PC-3 (cell line): ENCODE measurements at regions of chrX and their contacts with region 1.

Region 1: DNA sequence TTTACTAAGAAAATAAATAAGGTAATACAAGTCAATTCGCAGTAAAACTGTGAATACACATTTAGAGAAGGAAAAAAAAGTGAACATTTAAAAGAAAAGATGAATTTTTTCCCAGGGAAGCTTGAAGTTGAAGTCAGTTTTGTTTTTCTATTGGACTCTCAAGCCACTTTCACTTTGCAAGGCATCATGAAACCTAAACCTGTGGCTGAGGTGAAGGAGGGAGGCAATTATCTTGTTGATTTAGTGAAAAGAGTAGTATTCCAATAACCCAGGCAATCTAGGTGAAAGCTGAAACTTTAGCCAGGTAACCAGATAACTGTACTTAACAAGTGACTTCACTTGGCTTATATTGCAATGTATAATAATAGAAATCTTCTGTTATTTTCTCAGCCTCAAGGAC is 138.6 kb downstream of the HDX start:
- DNase-seq: no peak
- ATAC-seq: no peak; the same call in 1 of the 2 replicates
- H3K4me3 ChIP-seq: no peak overlapping the region
- H3K27ac ChIP-seq: no peak overlapping the region
- H3K4me1 ChIP-seq: no peaks in the 10 kb centered on the region
- H3K27me3 ChIP-seq: no peaks in the 10 kb centered on the region
- CTCF ChIP-seq: no peak

Region 2: GRCh38 chrX:84441143-84441542 is 77.5 kb after region 1 on chrX:
- CTCF ChIA-PET with region 1: no interaction called
- POLR2A ChIA-PET with region 1: no interaction called
- intact Hi-C with region 1: loop called (anchors 1 kb)
- DNase-seq: peak; percentile 78
- ATAC-seq: peak; percentile 92
- H3K4me3 ChIP-seq: no peak overlapping the region
- H3K27ac ChIP-seq: peak overlapping the region; percentile 72
- H3K4me1 ChIP-seq: peaks cover 27% of the 10 kb centered on the region
- H3K27me3 ChIP-seq: no peaks in the 10 kb centered on the region
- CTCF ChIP-seq: no peak

Region 3: GRCh38 chrX:84501798-84502628 is 138.3 kb after region 1 on chrX and contains the start of gene HDX:
- CTCF ChIA-PET with region 1: no interaction called
- POLR2A ChIA-PET with region 1: no interaction called
- intact Hi-C with region 1: loop called (anchors 5 kb)
- DNase-seq: peak; percentile 80
- ATAC-seq: peak; percentile 96
- H3K4me3 ChIP-seq: peak within 1 kb of the TSS; percentile 80
- H3K27ac ChIP-seq: peak within 1 kb of the TSS; percentile 70
- H3K4me1 ChIP-seq: no peaks in the 10 kb centered on the region
- H3K27me3 ChIP-seq: no peaks in the 10 kb centered on the region
- CTCF ChIP-seq: no peak
- total RNA-seq, gene HDX: 2.8 and 3.4 TPM in 2 replicates

Region 4: DNA sequence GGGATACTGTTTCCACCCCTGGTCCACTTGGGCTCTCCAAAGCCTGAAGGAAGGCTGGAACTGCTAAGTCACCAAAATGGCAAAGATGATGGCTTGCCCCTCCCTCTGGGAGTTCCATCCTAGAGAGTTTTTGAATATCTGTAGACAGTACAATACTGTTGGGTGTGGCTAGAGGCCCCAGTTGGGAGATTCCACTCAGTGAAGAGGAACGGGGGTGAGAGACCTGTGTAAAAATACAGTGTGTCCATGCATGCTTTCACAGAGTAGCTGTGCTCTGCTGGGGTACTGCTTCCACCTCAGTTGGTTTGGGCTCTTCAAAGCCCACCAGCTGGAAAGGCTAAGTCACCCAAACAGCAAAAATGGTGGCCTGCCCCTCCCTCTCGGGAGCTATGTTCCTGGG is 530.2 kb after region 1 on chrX:
- CTCF ChIA-PET with region 1: no interaction called
- POLR2A ChIA-PET with region 1: no interaction called
- intact Hi-C with region 1: no loop called
- DNase-seq: no peak
- ATAC-seq: no peak
- H3K4me3 ChIP-seq: no peak overlapping the region
- H3K27ac ChIP-seq: no peak overlapping the region
- H3K4me1 ChIP-seq: no peaks in the 10 kb centered on the region
- H3K27me3 ChIP-seq: no peaks in the 10 kb centered on the region
- CTCF ChIP-seq: no peak